Posterior cingulate gyrus (tissue), 11 donors: ENCODE measurements at regions of chr14 and their contacts with region 1.

Region 1: GRCh38 chr14:77760381-77761246 is at the start of gene SNW1:
- DNase-seq: peak; percentile 93 to 99 (median 96)

Region 2: GRCh38 chr14:77707724-77708408 is 52.7 kb before region 1 on chr14 and contains the starts of genes ALKBH1 and SLIRP:
- intact Hi-C with region 1: loop called (anchors 5 kb)
- DNase-seq: peak; percentile 83 to 98 (median 89)

Region 3: GRCh38 chr14:77721437-77721836 is 39.2 kb before region 1 on chr14:
- intact Hi-C with region 1: no loop called
- DNase-seq: no peak

Region 4: GRCh38 chr14:77799863-77800730 is 39.5 kb after region 1 on chr14 and contains the start of gene ADCK1:
- intact Hi-C with region 1: loop called (anchors 2 kb)
- DNase-seq: peak; percentile 87 to 99 (median 91)